Activated CD8-positive, alpha-beta memory T cell treated with anti-CD3 and anti-CD28 coated beads, Interleukin-2, amount 10 ng/mL, durations not matched to agents 7 days and 5 days (primary cell): ENCODE measurements at regions of chr5 and their contacts with region 1.

Region 1: DNA sequence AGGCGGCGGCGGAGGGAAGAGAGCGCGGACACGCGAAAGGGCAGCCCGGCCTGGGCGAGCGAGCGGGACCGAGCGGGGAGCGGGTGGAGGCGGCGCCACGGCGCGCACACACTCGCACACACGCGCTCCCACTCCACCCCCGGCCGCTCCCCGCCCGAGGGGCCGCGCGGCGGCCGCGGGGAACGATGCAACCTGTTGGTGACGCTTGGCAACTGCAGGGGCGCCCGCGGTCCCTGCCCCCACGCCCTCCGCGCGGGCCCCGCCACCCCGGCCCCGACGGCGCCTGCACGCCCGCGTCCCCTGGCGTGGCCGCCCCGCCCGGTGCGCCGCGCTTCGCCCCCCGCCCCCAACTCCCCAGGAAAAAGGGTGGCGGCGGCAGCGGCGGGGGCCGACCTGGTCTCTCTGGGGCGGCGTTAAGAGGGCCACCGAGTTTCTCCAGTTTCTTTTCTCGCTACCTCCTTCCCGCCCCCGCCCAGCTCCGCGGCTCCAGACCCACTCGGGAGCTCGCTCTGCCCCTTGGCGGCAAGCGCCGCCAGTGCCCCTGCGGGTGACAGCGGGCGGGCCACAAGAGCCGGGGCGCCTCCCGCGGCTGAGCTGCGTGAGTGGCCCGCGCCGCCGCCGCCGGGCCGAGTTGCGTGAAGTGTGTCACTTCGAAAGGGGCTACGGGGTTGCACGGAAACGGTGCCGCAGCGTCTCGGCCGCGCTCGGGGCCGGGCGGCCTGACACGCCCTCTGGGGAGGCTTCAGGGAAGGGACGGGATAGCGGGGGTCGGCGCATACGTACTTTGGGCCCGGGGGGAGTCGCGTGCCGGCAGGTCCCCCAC is at the start of gene NR3C1:
- DNase-seq: peak; percentile 87
- ATAC-seq: peak; percentile 71
- H3K4me3 Mint-ChIP-seq: peak within 1 kb of the TSS; percentile 88
- H3K27ac Mint-ChIP-seq: peak within 1 kb of the TSS; percentile 97
- H3K4me1 Mint-ChIP-seq: peaks cover 50% of the 10 kb centered on the region
- H3K27me3 Mint-ChIP-seq: no peaks in the 10 kb centered on the region
- total RNA-seq, gene NR3C1: 66.2 to 77.9 TPM

Region 2: DNA sequence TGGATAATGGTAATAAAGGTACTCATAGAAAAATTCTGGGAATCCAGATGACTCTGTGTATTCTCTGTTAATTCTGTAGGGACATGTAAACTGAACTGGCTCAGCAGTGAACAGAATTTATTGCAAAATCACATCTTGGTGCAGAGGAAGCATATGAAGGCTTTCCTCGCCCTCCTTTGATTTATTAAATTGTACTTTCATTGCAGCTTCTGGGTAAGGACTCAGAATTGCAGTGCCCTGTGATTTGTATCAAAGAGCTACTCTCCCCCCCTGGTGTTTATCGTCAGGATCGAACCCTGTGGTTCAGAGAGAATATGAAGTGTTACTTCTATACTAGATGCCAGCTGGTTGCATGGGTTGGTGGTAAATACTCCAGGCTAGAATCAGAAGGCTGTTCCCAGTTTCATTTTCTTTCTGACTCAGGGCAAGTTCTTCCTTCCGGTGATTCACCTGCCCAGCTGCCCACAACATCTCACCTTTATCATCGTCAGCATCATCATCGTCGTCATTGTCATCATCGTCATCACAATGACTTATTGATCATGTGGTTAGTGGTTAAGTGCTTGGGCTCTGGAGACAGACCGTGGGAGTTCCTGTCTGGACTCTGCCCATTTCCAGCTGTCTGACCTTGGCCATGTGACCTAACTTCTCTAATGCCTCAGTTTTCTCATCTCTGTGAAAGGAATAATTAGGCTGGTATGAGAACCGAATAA is 394.8 kb before region 1 on chr5:
- CTCF ChIA-PET with region 1: interaction called, 30 read pairs
- DNase-seq: peak; percentile 93
- ATAC-seq: peak; percentile 94
- H3K4me3 Mint-ChIP-seq: peak overlapping the region; percentile 35
- H3K27ac Mint-ChIP-seq: peak overlapping the region; percentile 74
- H3K4me1 Mint-ChIP-seq: peaks cover 65% of the 10 kb centered on the region
- H3K27me3 Mint-ChIP-seq: no peaks in the 10 kb centered on the region

Region 3: DNA sequence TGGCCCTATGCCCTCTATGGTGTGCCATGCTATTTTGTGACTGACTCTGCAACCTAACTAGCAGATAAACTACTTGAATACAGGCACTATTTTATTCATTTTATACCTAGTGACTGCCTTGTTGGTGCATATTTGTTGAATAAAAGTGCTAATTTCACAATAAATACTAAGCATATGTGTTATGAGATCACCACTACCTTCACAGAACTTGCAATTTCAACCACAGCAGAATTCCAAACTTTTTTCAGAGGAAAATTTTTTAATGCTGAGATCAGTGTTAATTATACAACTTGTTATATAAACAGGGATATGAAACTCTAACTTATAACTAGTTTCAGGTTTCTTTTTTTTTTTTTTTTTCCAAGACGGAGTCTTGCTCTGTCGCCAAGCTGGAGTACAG is 95.1 kb before region 1 on chr5:
- CTCF ChIA-PET with region 1: no interaction called
- DNase-seq: no peak
- ATAC-seq: no peak
- H3K4me3 Mint-ChIP-seq: no peak overlapping the region
- H3K27ac Mint-ChIP-seq: no peak overlapping the region
- H3K4me1 Mint-ChIP-seq: peaks cover 22% of the 10 kb centered on the region
- H3K27me3 Mint-ChIP-seq: no peaks in the 10 kb centered on the region

Region 4: DNA sequence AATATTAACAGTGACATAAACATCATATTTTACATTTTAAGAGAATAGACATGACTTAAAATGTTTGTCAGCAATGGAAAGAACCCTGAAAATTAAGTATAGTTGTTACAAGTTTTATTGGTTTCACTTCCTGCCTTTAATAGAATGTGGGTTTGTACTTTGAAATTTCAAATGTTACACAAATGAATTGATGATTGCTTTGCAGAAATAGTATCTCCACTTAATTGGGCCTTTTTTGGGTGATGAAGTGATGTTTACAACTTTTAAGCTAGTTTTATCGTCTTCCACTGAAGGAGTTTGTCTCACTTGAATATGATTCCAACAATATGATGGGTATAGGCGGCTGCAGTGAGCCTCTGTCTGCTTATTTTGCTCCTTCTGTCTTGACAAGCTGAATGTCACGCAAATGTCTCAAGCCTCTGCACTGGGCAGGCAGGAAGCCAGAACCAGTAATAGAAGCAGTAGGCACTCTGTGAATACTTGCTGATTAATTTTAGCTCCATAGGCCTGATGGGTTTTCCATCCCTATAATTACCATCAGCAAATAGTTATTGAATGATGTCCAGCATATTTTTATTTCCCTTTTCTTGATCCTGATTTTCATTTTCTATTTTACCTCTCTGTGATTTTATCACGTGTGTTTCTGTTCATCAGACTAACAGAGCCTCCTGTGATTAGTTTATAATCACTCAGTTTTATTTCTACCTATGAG is 10.3 kb after region 1 on chr5:
- CTCF ChIA-PET with region 1: interaction called, 16 read pairs
- DNase-seq: no peak
- ATAC-seq: peak; percentile 68
- H3K4me3 Mint-ChIP-seq: peak overlapping the region; percentile 3
- H3K27ac Mint-ChIP-seq: peak overlapping the region; percentile 68
- H3K4me1 Mint-ChIP-seq: peaks cover 53% of the 10 kb centered on the region
- H3K27me3 Mint-ChIP-seq: no peaks in the 10 kb centered on the region

Region 5: DNA sequence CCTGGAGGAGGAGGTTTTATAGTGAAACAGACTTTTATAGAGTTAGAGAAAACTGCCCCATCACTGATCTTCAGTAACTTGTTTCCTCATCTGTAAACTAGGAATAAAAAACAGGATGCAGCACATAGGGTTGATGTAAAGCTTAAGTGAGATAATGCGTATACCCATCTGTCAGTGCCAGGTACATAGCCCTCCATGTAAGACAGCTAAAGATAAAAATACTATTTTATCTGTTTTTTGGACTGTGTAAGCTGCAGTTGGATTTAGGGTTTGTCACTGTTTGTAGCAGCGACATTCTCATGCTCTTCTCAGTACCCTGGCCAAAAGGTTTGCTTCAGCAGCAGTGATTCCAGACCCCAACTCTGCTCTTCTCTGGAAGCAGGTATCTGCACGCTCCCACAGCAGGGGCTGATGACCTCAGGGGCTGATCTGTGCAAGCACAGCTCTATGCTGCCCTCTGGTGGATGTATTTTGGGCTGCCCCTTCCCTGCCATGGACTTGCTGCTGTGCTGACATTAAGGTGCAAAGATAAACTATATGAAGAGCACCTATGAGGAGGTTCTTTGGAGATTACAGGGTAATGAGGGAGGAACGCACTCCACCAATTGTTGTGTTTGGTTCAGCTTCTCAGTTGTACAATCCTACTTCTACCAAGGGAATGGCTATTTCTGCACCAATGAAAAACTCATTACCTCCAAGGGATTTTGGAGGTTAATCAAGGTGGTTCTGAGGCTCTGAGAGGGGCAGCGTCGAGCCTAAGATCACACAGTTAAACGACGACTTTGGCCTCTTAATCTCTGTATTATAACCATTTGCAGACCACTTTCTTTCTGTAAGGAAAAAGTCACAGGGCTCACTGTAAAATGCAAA is 421.3 kb after region 1 on chr5:
- CTCF ChIA-PET with region 1: interaction called, 11 read pairs
- DNase-seq: peak; percentile 89
- ATAC-seq: peak; percentile 86
- H3K4me3 Mint-ChIP-seq: no peak overlapping the region
- H3K27ac Mint-ChIP-seq: no peak overlapping the region
- H3K4me1 Mint-ChIP-seq: peaks cover 21% of the 10 kb centered on the region
- H3K27me3 Mint-ChIP-seq: no peaks in the 10 kb centered on the region